ENCODE measurements at regions of chr15 and their contacts with region 1.

Region 1: GRCh38 chr15:65286704-65287519 is at the start of gene PARP16:
- DNase-seq: peak; percentile 94
- H3K4me3 Mint-ChIP-seq: peak within 1 kb of the TSS; percentile 81
- H3K27ac Mint-ChIP-seq: peak within 1 kb of the TSS; percentile 78
- H3K4me1 Mint-ChIP-seq: peaks cover 35% of the 10 kb centered on the region
- H3K27me3 Mint-ChIP-seq: no peaks in the 10 kb centered on the region
- total RNA-seq, gene PARP16: 14.9 to 15.7 TPM

Region 2: GRCh38 chr15:65133548-65134200 is 153.2 kb before region 1 on chr15 and contains the start of gene PDCD7:
- CTCF ChIA-PET with region 1: interaction called, 4 read pairs
- POLR2A ChIA-PET with region 1: interaction called, 19 read pairs
- DNase-seq: peak; percentile 87
- H3K4me3 Mint-ChIP-seq: peak within 1 kb of the TSS; percentile 88
- H3K27ac Mint-ChIP-seq: peak within 1 kb of the TSS; percentile 86
- H3K4me1 Mint-ChIP-seq: peaks cover 30% of the 10 kb centered on the region
- H3K27me3 Mint-ChIP-seq: no peaks in the 10 kb centered on the region
- total RNA-seq, gene PDCD7: 37.8 to 38.9 TPM

Region 3: GRCh38 chr15:65184868-65185738 is 101.8 kb before region 1 on chr15 and contains the start of gene CLPX:
- CTCF ChIA-PET with region 1: interaction called, 9 read pairs
- POLR2A ChIA-PET with region 1: interaction called, 44 read pairs
- DNase-seq: peak; percentile 91
- H3K4me3 Mint-ChIP-seq: peak within 1 kb of the TSS; percentile 90
- H3K27ac Mint-ChIP-seq: peak within 1 kb of the TSS; percentile 83
- H3K4me1 Mint-ChIP-seq: peaks cover 21% of the 10 kb centered on the region
- H3K27me3 Mint-ChIP-seq: peaks cover 2% of the 10 kb centered on the region
- total RNA-seq, gene CLPX: 48.5 to 57.8 TPM

Region 4: DNA sequence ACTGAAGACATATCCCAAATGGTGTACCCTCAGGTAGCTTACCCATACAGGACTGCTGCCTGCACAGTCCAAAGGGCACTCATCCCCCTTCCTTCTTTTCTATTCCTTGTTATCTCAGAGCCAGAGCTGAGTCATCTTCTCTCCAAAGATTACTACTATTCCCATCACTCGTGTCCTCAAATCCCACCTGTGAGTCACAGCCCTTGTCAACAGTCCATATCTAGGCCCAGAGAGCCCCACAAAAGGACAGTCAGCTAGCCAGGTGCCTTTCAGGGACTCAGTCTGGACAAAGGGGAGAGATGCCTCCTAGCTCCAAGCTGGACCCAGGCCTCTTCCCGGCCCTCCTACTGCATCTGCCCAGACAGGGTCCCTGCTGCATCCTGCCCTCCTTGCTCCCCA is 11.2 kb before region 1 on chr15:
- CTCF ChIA-PET with region 1: interaction called, 20 read pairs
- POLR2A ChIA-PET with region 1: interaction called, 13 read pairs
- DNase-seq: no peak
- H3K4me3 Mint-ChIP-seq: no peak overlapping the region
- H3K27ac Mint-ChIP-seq: no peak overlapping the region
- H3K4me1 Mint-ChIP-seq: peaks cover 15% of the 10 kb centered on the region
- H3K27me3 Mint-ChIP-seq: no peaks in the 10 kb centered on the region

Region 5: GRCh38 chr15:65298731-65299130 is 11.8 kb after region 1 on chr15:
- CTCF ChIA-PET with region 1: interaction called, 29 read pairs
- POLR2A ChIA-PET with region 1: interaction called, 166 read pairs
- DNase-seq: no peak
- H3K4me3 Mint-ChIP-seq: peak overlapping the region; percentile 80
- H3K27ac Mint-ChIP-seq: peak overlapping the region; percentile 85
- H3K4me1 Mint-ChIP-seq: peaks cover 41% of the 10 kb centered on the region
- H3K27me3 Mint-ChIP-seq: no peaks in the 10 kb centered on the region